ENCODE measurements at regions of chr1 and their contacts with region 1.

Region 1: DNA sequence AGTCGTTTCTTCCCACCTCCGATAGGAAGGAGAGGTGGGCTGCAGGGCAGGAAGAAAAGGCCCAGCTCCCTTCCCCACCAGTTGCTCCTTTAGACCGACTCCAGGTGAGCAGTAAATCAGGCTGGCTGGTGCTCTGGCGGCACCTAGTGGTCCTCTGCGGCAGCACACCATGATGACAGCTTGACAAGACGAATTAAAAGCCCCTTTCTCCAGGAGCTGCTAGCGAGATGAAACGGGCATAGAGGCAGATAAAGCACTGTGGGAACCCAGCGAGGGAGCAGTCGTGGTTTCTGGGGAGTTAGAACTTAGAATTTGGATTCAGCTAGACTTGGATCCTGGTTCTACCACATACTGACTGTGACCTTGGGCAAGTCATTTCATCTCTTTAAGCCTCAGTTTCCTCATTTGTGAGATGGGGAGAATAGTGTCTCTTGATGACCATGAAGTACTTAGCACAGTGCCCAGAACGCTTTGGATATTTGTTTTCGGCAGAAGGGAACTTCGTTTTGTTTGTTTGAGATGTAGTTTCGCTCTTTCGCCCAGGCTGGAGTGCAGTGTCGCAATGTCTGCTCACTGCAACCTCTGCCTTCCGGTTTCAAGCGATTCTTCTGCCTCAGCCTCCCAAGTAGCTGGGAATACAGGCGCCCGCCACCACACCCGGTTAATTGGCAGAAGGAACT is 21.8 kb upstream of the COL9A2 start:
- DNase-seq: peak; percentile 81 to 91 (median 87)
- ATAC-seq: peak; percentile 99
- H3K4me3 ChIP-seq: no peak overlapping the region
- H3K4me3 Mint-ChIP-seq: peak overlapping the region; percentile 37 to 76 (median 57)
- H3K27ac ChIP-seq: no peak overlapping the region
- H3K27ac Mint-ChIP-seq: peak overlapping the region in 8 of 9 donors; percentile 16 to 86 (median 70)
- H3K4me1 ChIP-seq: peaks cover 6 to 35% of the 10 kb centered on the region in 2 donors
- H3K4me1 Mint-ChIP-seq: peaks cover 33 to 50% (median 49%) of the 10 kb centered on the region in 7 donors
- H3K27me3 ChIP-seq: no peaks in the 10 kb centered on the region
- H3K27me3 Mint-ChIP-seq: no peaks in the 10 kb centered on the region

Region 2: DNA sequence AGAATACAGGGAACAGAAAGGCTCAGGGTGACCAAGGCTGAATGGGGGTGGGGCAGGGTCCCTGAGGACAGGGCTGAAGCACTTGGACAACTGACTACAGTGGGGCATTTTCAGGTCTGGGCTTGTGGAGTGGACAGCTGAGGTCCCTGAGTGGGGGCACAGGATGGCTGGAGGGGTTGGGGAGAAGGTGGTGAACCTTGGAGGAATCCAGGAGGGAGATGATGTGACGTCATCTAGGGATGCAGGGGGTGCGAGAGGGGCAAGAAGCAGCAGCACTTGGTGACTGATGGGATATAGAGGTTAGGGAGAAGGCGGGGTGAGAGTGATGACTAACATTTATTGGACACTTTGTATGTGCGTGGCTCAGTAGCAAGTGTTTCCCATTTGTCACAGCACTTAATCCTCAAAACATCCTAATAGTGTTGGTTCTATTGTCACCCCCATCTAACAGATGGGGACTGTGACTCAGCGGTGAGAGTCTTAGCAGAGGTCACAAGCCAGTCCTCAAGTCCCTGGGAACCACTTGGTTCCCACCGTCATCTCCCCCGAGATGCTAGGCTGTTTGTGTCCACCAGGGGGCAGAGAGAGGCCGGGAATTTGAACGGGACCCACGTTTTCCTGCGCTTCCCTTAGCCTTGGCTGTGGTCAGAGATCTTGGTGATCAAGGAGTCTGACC is 522.3 kb before region 1 on chr1:
- CTCF ChIA-PET with region 1: no interaction called
- POLR2A ChIA-PET with region 1: no interaction called
- intact Hi-C with region 1: loop called in 1 of 2 experiments (anchors 5 kb)
- DNase-seq: peak; percentile 16 to 73 (median 41)
- ATAC-seq: peak; percentile 84
- H3K4me3 ChIP-seq: peak overlapping the region; percentile 31
- H3K4me3 Mint-ChIP-seq: peak overlapping the region; percentile 35 to 94 (median 85)
- H3K27ac ChIP-seq: no peak overlapping the region
- H3K27ac Mint-ChIP-seq: peak overlapping the region in 4 of 9 donors; percentile 43 to 85 (median 70)
- H3K4me1 ChIP-seq: no peaks in the 10 kb centered on the region
- H3K4me1 Mint-ChIP-seq: peaks cover 6 to 15% (median 8%) of the 10 kb centered on the region in 7 donors
- H3K27me3 ChIP-seq: peaks cover 0 to 2% of the 10 kb centered on the region in 2 donors
- H3K27me3 Mint-ChIP-seq: peaks cover 0 to 28% (median 4%) of the 10 kb centered on the region in 5 donors

Region 3: GRCh38 chr1:40143891-40144575 is 194.9 kb before region 1 on chr1:
- CTCF ChIA-PET with region 1: interaction called, 41 read pairs
- POLR2A ChIA-PET with region 1: interaction called, 3 read pairs
- intact Hi-C with region 1: loop called (anchors 1 to 2 kb)
- DNase-seq: peak; percentile 19 to 72 (median 57)
- ATAC-seq: peak; percentile 84
- H3K4me3 ChIP-seq: no peak overlapping the region
- H3K4me3 Mint-ChIP-seq: no peak overlapping the region
- H3K27ac ChIP-seq: no peak overlapping the region
- H3K27ac Mint-ChIP-seq: peak overlapping the region in 1 of 9 donors; percentile 5
- H3K4me1 ChIP-seq: no peaks in the 10 kb centered on the region
- H3K4me1 Mint-ChIP-seq: peaks cover 0 to 12% (median 0%) of the 10 kb centered on the region in 7 donors
- H3K27me3 ChIP-seq: no peaks in the 10 kb centered on the region
- H3K27me3 Mint-ChIP-seq: peaks cover 5 to 61% (median 17%) of the 10 kb centered on the region in 5 donors

Region 4: GRCh38 chr1:40315239-40315794 is 23.6 kb before region 1 on chr1:
- CTCF ChIA-PET with region 1: interaction called, 52 read pairs
- POLR2A ChIA-PET with region 1: interaction called, 5 read pairs
- intact Hi-C with region 1: loop called (anchors 1 to 2 kb)
- DNase-seq: peak; percentile 70 to 90 (median 86)
- ATAC-seq: peak; percentile 94
- H3K4me3 ChIP-seq: peak overlapping the region; percentile 73
- H3K4me3 Mint-ChIP-seq: peak overlapping the region; percentile 84 to 95 (median 88)
- H3K27ac ChIP-seq: peak overlapping the region; percentile 46
- H3K27ac Mint-ChIP-seq: peak overlapping the region; percentile 43 to 84 (median 76)
- H3K4me1 ChIP-seq: peaks cover 8% of the 10 kb centered on the region in 2 donors
- H3K4me1 Mint-ChIP-seq: peaks cover 11 to 66% (median 34%) of the 10 kb centered on the region in 7 donors
- H3K27me3 ChIP-seq: no peaks in the 10 kb centered on the region
- H3K27me3 Mint-ChIP-seq: peaks cover 7 to 36% (median 13%) of the 10 kb centered on the region in 5 donors

Region 5: GRCh38 chr1:40373338-40374283 is 34.7 kb after region 1 on chr1 and contains the start of gene SMAP2:
- CTCF ChIA-PET with region 1: interaction called, 8 read pairs
- POLR2A ChIA-PET with region 1: interaction called, 23 read pairs
- intact Hi-C with region 1: loop called in 1 of 2 experiments (anchors 1 kb)
- DNase-seq: peak; percentile 94 to 98 (median 96)
- ATAC-seq: peak; percentile 91
- H3K4me3 ChIP-seq: peak within 1 kb of the TSS; percentile 99
- H3K4me3 Mint-ChIP-seq: peak within 1 kb of the TSS; percentile 94 to 100 (median 99)
- H3K27ac ChIP-seq: peak within 1 kb of the TSS; percentile 99
- H3K27ac Mint-ChIP-seq: peak within 1 kb of the TSS; percentile 97 to 100 (median 99)
- H3K4me1 ChIP-seq: peaks cover 33 to 36% of the 10 kb centered on the region in 2 donors
- H3K4me1 Mint-ChIP-seq: peaks cover 43 to 66% (median 54%) of the 10 kb centered on the region in 7 donors
- H3K27me3 ChIP-seq: no peaks in the 10 kb centered on the region
- H3K27me3 Mint-ChIP-seq: peaks cover 0 to 4% (median 0%) of the 10 kb centered on the region in 5 donors
- total RNA-seq, gene SMAP2: 144 to 210 (median 187) TPM

Region 6: DNA sequence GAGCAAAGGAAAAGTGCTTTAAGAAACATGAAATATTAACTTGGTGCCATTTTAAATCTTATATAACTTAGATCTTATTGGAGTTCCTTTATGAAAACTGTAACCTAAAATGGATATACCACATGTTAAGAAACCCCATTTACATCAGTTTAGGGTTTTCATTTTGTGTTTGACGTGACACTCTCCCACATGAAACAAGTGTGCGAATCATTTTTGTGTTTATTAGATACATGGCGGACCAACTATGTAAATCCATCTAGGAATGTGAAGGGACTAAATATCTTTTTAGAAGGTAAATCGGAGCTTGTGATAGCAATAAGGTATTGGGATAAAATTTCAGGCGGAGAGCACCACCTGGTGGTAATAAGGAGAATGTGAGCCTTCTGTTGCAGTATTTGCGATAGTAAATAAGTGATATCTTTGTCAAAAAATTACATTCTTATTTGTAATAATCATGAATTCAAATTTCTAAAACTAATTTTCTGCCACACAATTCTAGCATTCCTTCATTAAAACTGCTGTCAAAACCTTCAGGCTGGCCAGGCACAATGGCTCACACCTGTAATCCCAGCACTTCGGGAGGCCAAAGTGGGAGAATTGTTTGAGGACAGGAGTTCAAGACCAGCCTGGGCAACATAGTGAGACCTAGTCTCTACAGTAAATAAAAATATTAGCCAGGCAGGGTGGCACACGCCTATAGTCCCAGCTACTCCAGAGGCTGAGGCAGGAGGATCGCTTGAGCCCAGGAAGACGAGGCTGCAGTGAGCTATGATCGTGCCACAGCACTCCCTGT is 66.0 kb after region 1 on chr1:
- CTCF ChIA-PET with region 1: interaction called, 35 read pairs
- POLR2A ChIA-PET with region 1: interaction called, 5 read pairs
- intact Hi-C with region 1: loop called (anchors 1 kb)
- DNase-seq: peak in 7 of 9 donors; percentile 65 to 84 (median 78)
- ATAC-seq: peak; percentile 85
- H3K4me3 ChIP-seq: no peak overlapping the region
- H3K4me3 Mint-ChIP-seq: peak overlapping the region; percentile 0 to 85 (median 71)
- H3K27ac ChIP-seq: peak overlapping the region; percentile 92
- H3K27ac Mint-ChIP-seq: peak overlapping the region; percentile 84 to 98 (median 92)
- H3K4me1 ChIP-seq: peaks cover 40 to 52% of the 10 kb centered on the region in 2 donors
- H3K4me1 Mint-ChIP-seq: peaks cover 42 to 92% (median 79%) of the 10 kb centered on the region in 7 donors
- H3K27me3 ChIP-seq: no peaks in the 10 kb centered on the region
- H3K27me3 Mint-ChIP-seq: no peaks in the 10 kb centered on the region

Region 7: GRCh38 chr1:40438391-40439015 is 99.6 kb after region 1 on chr1:
- CTCF ChIA-PET with region 1: interaction called, 10 read pairs
- POLR2A ChIA-PET with region 1: no interaction called
- intact Hi-C with region 1: no loop called
- DNase-seq: peak in 5 of 9 donors; percentile 17 to 41 (median 31)
- ATAC-seq: peak; percentile 72
- H3K4me3 ChIP-seq: no peak overlapping the region
- H3K4me3 Mint-ChIP-seq: no peak overlapping the region
- H3K27ac ChIP-seq: no peak overlapping the region
- H3K27ac Mint-ChIP-seq: no peak overlapping the region
- H3K4me1 ChIP-seq: no peaks in the 10 kb centered on the region
- H3K4me1 Mint-ChIP-seq: peaks cover 0 to 5% (median 0%) of the 10 kb centered on the region in 7 donors
- H3K27me3 ChIP-seq: no peaks in the 10 kb centered on the region
- H3K27me3 Mint-ChIP-seq: no peaks in the 10 kb centered on the region